ENCODE measurements at regions of chr7 and their contacts with region 1.

Region 1: GRCh38 chr7:131383417-131384285 is 56.0 kb downstream of the MKLN1 start:
- DNase-seq: no peak
- H3K4me3 Mint-ChIP-seq: no peak overlapping the region
- H3K27ac Mint-ChIP-seq: no peak overlapping the region
- H3K4me1 Mint-ChIP-seq: peaks cover 23% of the 10 kb centered on the region
- H3K27me3 Mint-ChIP-seq: no peaks in the 10 kb centered on the region

Region 2: DNA sequence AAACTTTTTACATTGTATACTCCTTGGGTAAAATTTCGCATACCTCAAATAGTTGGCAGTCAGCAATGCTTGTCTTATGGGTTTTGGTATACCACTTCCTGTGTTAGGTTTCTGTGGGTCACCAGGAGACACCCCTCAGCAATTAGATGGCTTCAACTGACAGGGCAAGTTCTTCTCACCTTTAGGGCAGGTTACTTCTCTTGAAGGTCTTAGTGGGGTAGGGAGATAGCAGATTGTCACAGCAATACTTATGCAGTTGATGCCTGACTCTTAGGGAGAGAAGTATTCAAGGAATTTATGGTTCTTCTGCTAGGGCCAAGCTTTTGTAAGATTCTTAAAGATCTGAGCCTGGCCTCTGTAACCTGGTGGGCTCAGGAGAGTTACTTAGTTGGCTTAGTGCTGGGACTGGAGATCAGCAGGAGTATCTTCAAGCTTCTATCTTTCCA is 13.1 kb before region 1 on chr7:
- intact Hi-C with region 1: loop called (anchors 1 kb)
- DNase-seq: peak; percentile 45
- H3K4me3 Mint-ChIP-seq: no peak overlapping the region
- H3K27ac Mint-ChIP-seq: no peak overlapping the region
- H3K4me1 Mint-ChIP-seq: peaks cover 62% of the 10 kb centered on the region
- H3K27me3 Mint-ChIP-seq: peaks cover 5% of the 10 kb centered on the region

Measured in activated T-helper 1 cell treated with anti-CD3 and anti-CD28 coated beads, Interleukin-12 subunit alpha, Interleukin-12 subunit beta, Interleukin-2, Interleukin-4 antibody, amounts not matched to agents 30 ng/mL and 10 ng/mL and 1 ng/mL, durations not matched to agents 14 hours and 24 hours and 36 hours (primary cell).